PC-3 (cell line): ENCODE measurements at regions of chr3 and their contacts with region 1.

Region 1: DNA sequence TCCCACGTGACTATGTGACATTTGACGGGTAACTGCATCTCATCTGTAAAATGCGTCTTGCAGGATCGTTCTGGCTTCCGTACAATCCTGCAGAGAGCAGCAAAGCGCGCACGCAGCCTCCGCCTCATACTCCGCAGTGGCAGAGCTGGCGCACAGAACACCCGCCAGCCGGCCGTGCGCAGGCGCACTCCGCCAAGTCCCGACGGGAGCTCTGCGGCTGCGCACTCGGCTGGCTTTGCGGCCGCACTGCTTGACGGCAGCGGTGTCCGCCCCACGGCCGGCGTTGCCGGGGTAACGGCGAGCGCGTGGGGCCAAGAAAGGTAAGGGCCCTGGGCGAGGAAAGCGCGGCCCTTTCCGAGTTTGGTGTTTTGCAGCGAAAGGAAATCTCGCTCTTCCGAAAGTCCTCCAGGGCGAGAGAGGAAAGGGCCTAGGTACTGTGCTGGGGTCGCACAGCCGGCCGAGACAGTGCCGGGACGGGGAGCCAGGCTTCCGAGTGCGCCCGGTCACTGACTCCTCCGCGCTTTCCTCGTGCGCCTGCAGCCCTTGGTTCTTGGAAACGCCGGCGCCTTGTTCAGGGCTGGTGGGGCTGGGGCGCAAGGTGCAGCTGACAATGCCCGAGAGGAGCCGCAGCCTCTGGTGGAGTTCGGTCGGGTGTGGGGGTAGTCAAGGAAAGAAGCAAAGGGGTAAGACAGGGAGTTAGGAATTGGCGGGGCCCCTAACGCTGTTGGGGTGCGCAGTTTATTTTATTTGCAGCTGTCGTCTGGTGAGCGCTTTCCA is at the start of gene TSEN2:
- DNase-seq: peak; percentile 98
- ATAC-seq: peak; percentile 80
- H3K4me3 ChIP-seq: peak within 1 kb of the TSS; percentile 81
- H3K27ac ChIP-seq: peak within 1 kb of the TSS; percentile 81
- H3K4me1 ChIP-seq: peaks cover 57% of the 10 kb centered on the region
- H3K27me3 ChIP-seq: no peaks in the 10 kb centered on the region
- CTCF ChIP-seq: no peak
- total RNA-seq, gene TSEN2: 40.2 and 51.0 TPM in 2 replicates

Region 2: DNA sequence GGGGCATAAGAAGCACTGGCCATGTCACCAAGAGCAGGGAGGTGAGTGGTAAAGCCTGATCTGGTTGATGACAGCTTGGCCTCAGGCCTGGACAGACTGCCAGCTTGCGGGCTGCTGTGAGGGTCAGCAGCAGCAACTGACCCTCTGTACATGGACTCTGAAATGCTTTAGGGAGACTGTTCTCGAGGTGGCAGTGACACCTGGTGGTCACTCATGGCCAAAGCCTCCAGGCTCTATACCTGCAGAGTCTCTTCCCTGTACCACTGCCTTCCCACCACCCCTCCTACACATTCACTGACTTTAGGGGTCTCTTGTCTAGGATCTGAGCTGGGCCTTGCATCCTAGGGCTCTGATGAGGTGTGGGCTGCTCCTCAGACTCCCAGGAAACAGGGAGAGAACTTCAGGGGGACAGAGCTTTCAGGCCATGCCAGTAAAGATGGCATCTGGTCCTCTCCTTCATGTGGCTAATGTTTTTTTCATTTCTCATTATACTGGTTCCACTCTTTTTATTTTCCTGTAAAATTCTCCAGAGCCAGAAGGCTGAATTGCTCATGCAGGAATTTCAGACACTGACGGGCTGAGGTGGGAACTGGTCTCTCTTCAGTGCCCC is 308.4 kb before region 1 on chr3:
- CTCF ChIA-PET with region 1: interaction called, 5 read pairs
- POLR2A ChIA-PET with region 1: no interaction called
- intact Hi-C with region 1: loop called (anchors 5 kb)
- DNase-seq: peak; percentile 73
- ATAC-seq: peak; percentile 81
- H3K4me3 ChIP-seq: no peak overlapping the region
- H3K27ac ChIP-seq: peak overlapping the region; percentile 32; the same call in 1 of the 2 replicates
- H3K4me1 ChIP-seq: peaks cover 48% of the 10 kb centered on the region
- H3K27me3 ChIP-seq: no peaks in the 10 kb centered on the region
- CTCF ChIP-seq: peak; percentile 90

Region 3: DNA sequence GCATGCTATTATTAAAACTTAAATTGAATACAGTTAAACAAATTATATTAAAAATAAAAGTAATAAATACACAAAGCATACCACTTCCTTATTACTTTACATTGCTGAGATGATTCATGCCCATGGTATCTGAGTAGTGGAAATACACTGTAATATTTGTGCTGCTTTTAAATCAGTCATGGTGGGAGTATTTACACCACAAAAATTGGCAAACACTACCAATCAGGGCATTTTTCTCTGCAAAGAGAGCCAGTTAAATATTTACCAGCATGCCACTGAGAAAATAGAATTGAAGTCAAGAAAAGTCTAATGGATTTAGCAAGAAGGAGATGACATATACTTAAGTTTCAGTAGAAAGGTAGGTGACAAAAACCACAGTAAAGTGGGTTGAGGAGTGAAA is 175.9 kb before region 1 on chr3:
- CTCF ChIA-PET with region 1: no interaction called
- POLR2A ChIA-PET with region 1: no interaction called
- intact Hi-C with region 1: loop called (anchors 5 kb)
- DNase-seq: peak; percentile 98
- ATAC-seq: peak; percentile 54
- H3K4me3 ChIP-seq: peak overlapping the region; percentile 17
- H3K27ac ChIP-seq: peak overlapping the region; percentile 97
- H3K4me1 ChIP-seq: peaks cover 95% of the 10 kb centered on the region
- H3K27me3 ChIP-seq: no peaks in the 10 kb centered on the region
- CTCF ChIP-seq: no peak

Region 4: GRCh38 chr3:12336099-12336498 is 148.3 kb before region 1 on chr3:
- CTCF ChIA-PET with region 1: no interaction called
- POLR2A ChIA-PET with region 1: interaction called, 10 read pairs
- intact Hi-C with region 1: no loop called
- DNase-seq: no peak
- ATAC-seq: no peak
- H3K4me3 ChIP-seq: no peak overlapping the region
- H3K27ac ChIP-seq: no peak overlapping the region
- H3K4me1 ChIP-seq: peaks cover 38% of the 10 kb centered on the region
- H3K27me3 ChIP-seq: no peaks in the 10 kb centered on the region
- CTCF ChIP-seq: no peak

Region 5: DNA sequence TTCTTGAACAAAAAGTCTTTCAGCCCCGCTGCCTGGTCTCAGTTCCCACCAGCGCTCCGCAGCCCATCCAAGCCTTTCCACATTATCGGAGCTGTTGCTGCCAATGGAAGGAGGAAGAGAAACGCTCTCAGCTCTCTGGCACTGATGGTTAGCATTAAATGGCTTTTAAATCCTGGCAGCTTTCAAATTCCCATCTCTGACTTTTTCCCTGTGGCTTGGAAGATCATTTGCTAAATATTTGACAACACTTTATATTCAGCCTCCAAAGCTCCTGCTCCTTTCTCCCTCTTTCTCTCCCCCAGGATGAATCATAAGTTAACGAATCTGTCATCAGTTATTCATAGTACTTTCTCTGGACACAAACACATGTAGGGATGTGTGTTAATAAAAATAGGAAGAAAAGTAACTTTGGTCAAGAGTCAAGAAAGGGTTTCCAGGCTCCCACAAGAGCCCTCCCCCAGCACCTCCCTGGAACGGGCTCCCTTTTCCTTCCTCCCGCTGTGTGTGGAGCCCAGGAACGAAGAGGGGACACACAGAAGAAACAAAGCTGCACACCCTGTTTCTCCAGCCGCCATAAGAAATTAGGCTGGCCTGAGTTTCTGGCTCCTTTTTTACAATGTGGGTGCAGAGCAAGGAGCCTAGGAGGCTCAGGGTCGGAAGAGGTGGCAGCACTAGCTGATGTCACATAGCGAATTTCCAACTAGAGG is 47.7 kb before region 1 on chr3:
- CTCF ChIA-PET with region 1: no interaction called
- POLR2A ChIA-PET with region 1: no interaction called
- intact Hi-C with region 1: loop called (anchors 5 kb)
- DNase-seq: peak; percentile 78
- ATAC-seq: peak; percentile 61
- H3K4me3 ChIP-seq: no peak overlapping the region
- H3K27ac ChIP-seq: peak overlapping the region; percentile 95
- H3K4me1 ChIP-seq: peaks cover 35% of the 10 kb centered on the region
- H3K27me3 ChIP-seq: no peaks in the 10 kb centered on the region
- CTCF ChIP-seq: no peak